Sigmoid colon (tissue), 7 donors: ENCODE measurements at regions of chr19 and their contacts with region 1.

Region 1: GRCh38 chr19:17107525-17108452 is 32.2 kb downstream of the MYO9B start:
- DNase-seq: peak; percentile 97
- H3K4me3 ChIP-seq: peak overlapping the region in 3 of 4 donors; percentile 10 to 26 (median 23)
- H3K27ac ChIP-seq: peak overlapping the region; percentile 82 to 94 (median 88)
- H3K4me1 ChIP-seq: peaks cover 0 to 55% (median 24%) of the 10 kb centered on the region in 4 donors
- H3K27me3 ChIP-seq: no peaks in the 10 kb centered on the region
- CTCF ChIP-seq: no peak
- EP300 ChIP-seq: peak in 2 of 4 donors; percentile 44 to 50
- POLR2A ChIP-seq: no peak

Region 2: GRCh38 chr19:17069218-17069617 is 38.6 kb before region 1 on chr19:
- intact Hi-C with region 1: loop called (anchors 5 kb)
- DNase-seq: no peak
- H3K4me3 ChIP-seq: no peak overlapping the region
- H3K27ac ChIP-seq: no peak overlapping the region
- H3K4me1 ChIP-seq: peaks cover 0 to 9% (median 3%) of the 10 kb centered on the region in 4 donors
- H3K27me3 ChIP-seq: no peaks in the 10 kb centered on the region
- CTCF ChIP-seq: no peak
- EP300 ChIP-seq: no peak
- POLR2A ChIP-seq: no peak